SK-N-SH (cell line): ENCODE measurements at regions of chr6 and their contacts with region 1.

Region 1: DNA sequence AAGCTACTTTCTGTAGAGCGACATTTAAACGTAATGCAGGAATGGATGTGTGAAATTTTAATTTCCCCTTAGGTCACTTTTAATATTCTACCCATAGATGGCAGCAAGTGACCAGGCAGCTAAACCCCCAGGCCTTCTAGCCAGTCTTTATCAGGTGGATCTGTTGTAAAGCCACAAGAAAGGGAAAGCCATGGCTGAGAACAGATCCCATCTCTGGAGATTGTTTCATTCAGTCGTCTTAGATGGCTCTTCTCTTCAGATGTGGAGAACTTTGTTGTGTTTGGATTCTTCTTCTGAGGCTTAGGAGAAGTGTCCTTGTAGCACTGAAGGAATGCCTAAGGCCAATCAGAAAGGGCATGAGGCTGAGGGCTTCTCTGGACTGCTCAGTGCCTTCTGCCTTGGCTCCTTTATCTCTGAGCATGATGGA is 15.8 kb upstream of the RNF182 start:
- DNase-seq: peak; percentile 78
- H3K4me3 ChIP-seq: no peak overlapping the region
- H3K27ac ChIP-seq: no peak overlapping the region
- H3K4me1 ChIP-seq: peaks cover under 1 to 2% of the 10 kb centered on the region in 2 experiments; a peak in 2 of 4 replicates
- H3K27me3 ChIP-seq: no peaks in the 10 kb centered on the region
- CTCF ChIP-seq: peak; percentile 91
- EP300 ChIP-seq: no peak
- RAD21 ChIP-seq: peak; percentile 98

Region 2: GRCh38 chr6:13883966-13884365 is 25.0 kb before region 1 on chr6:
- CTCF ChIA-PET with region 1: interaction called, 16 read pairs
- POLR2A ChIA-PET with region 1: no interaction called
- DNase-seq: no peak
- H3K4me3 ChIP-seq: no peak overlapping the region
- H3K27ac ChIP-seq: no peak overlapping the region
- H3K4me1 ChIP-seq: no peaks in the 10 kb centered on the region
- H3K27me3 ChIP-seq: no peaks in the 10 kb centered on the region; the same call in 1 of the 2 replicates
- CTCF ChIP-seq: no peak
- EP300 ChIP-seq: no peak
- RAD21 ChIP-seq: no peak

Region 3: GRCh38 chr6:13924146-13924948 is 15.4 kb after region 1 on chr6:
- CTCF ChIA-PET with region 1: interaction called, 16 read pairs
- POLR2A ChIA-PET with region 1: no interaction called
- DNase-seq: peak; percentile 94
- H3K4me3 ChIP-seq: peak overlapping the region; percentile 66 to 80
- H3K27ac ChIP-seq: peak overlapping the region; percentile 79 to 81
- H3K4me1 ChIP-seq: peaks cover 3 to 11% of the 10 kb centered on the region in 2 experiments; a peak in 1 of 4 replicates
- H3K27me3 ChIP-seq: no peaks in the 10 kb centered on the region
- CTCF ChIP-seq: no peak
- EP300 ChIP-seq: no peak
- RAD21 ChIP-seq: no peak

Region 4: DNA sequence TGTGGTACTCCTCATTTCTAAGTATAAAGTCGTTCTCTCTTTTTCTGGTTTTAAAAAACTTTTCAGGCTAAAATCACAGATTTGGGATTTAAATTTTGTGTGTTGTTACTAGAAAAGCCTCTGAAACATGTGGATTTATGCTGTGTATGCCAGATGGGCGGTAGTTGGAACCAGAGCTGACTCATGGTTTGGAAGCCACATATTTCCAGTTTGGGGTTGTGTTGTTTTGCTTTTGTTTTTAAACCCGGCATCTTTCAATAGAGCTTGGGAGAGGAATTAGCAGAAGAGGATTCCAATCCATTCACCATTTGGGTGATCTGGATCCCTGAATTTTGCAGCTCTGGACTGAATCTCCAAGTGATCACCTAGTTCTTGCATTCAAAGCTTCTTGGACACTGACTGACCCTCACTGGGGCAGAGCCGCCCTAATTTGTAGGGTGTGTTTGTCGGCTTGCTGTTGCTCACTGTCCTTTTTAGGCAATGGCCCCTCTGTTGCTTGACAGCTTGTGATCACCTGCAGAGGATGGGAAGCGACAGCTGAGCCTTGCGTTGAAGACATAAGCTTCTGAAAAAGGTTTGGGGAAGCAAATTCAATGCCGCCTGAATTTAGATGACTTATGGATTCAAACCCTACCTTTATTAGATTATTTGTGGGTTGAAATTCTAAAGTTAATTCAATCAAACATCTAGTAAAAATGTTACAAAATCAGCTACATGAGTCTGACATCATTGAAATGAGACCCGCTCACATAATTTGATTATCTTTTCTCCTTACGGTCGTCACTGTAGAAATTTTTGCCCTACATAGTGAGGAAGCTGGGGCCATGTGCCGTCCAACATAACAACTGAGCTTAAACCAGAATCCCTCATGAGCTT is 128.7 kb after region 1 on chr6:
- CTCF ChIA-PET with region 1: interaction called, 12 read pairs
- POLR2A ChIA-PET with region 1: no interaction called
- DNase-seq: no peak
- H3K4me3 ChIP-seq: no peak overlapping the region
- H3K27ac ChIP-seq: no peak overlapping the region
- H3K4me1 ChIP-seq: peaks cover 3 to 7% of the 10 kb centered on the region in 2 experiments; a peak in 2 of 4 replicates
- H3K27me3 ChIP-seq: no peaks in the 10 kb centered on the region
- CTCF ChIP-seq: no peak
- EP300 ChIP-seq: no peak
- RAD21 ChIP-seq: no peak

Region 5: GRCh38 chr6:14053811-14054210 is 144.8 kb after region 1 on chr6:
- CTCF ChIA-PET with region 1: interaction called, 26 read pairs
- POLR2A ChIA-PET with region 1: no interaction called
- DNase-seq: no peak
- H3K4me3 ChIP-seq: no peak overlapping the region
- H3K27ac ChIP-seq: no peak overlapping the region
- H3K4me1 ChIP-seq: no peaks in the 10 kb centered on the region; a peak in 1 of 4 replicates
- H3K27me3 ChIP-seq: no peaks in the 10 kb centered on the region
- CTCF ChIP-seq: no peak
- EP300 ChIP-seq: no peak
- RAD21 ChIP-seq: no peak

Region 6: DNA sequence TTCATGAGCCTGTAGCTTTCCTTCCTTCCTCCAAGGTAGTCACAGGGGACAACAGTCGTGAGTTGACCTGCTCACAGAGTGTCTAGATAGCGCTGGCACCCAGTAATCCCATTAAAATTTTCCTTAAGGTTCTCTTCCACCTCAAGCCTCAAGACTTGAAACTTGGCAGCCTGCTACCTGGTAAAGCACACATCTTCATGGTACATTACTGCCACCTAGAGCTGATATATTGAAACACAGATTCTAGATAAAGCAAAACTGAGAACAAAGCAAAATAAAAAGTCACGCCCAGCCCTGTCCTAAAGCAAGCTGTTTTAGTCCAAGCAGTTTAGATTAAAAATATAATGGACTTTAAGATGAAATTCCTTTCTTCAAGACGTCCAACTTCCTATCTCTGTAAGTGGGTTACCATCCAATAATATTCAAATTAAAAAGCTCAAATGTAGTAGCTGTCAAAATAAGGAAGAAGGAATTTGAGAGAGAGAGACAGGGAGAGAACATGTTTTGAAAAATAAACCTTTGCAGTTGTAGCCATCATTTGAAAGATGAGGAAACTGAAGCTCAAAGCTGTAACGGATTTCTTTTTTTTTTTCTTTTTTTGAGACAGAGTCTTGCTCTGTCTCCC is 157.9 kb after region 1 on chr6:
- CTCF ChIA-PET with region 1: interaction called, 155 read pairs
- POLR2A ChIA-PET with region 1: no interaction called
- DNase-seq: peak; percentile 67
- H3K4me3 ChIP-seq: peak overlapping the region in 1 of 2 experiments; percentile 12; a peak in 1 of 4 replicates
- H3K27ac ChIP-seq: no peak overlapping the region
- H3K4me1 ChIP-seq: no peaks in the 10 kb centered on the region
- H3K27me3 ChIP-seq: no peaks in the 10 kb centered on the region
- CTCF ChIP-seq: peak; percentile 76
- EP300 ChIP-seq: no peak
- RAD21 ChIP-seq: peak; percentile 94

Region 7: DNA sequence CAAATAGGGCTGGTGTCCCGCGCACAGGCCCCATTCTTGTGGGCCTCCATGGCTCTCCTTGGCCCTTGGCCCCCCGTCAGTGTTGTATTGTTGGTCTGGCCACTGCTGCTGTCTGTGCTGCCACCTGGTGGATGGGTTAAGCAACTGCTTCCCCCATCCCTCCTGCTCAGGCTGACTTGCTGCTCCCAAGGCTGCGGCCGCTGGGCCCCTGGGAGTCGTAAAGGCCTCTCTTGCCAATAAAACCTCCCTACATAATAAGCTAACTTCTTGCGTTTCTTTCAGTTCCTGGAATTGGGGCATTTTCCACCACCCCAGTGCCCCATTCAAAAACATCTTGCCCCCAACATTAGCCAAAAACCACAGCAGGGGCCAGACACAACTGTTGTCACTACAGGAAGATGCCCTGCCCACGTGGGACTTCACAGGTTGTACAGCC is 235.7 kb after region 1 on chr6:
- CTCF ChIA-PET with region 1: interaction called, 15 read pairs
- POLR2A ChIA-PET with region 1: no interaction called
- DNase-seq: peak; percentile 82
- H3K4me3 ChIP-seq: peak overlapping the region in 1 of 2 experiments; percentile 30; a peak in 1 of 4 replicates
- H3K27ac ChIP-seq: no peak overlapping the region
- H3K4me1 ChIP-seq: no peaks in the 10 kb centered on the region; a peak in 2 of 4 replicates
- H3K27me3 ChIP-seq: no peaks in the 10 kb centered on the region
- CTCF ChIP-seq: peak; percentile 89
- EP300 ChIP-seq: no peak
- RAD21 ChIP-seq: peak; percentile 76